ENCODE measurements at regions of chr12 and their contacts with region 1.

Region 1: DNA sequence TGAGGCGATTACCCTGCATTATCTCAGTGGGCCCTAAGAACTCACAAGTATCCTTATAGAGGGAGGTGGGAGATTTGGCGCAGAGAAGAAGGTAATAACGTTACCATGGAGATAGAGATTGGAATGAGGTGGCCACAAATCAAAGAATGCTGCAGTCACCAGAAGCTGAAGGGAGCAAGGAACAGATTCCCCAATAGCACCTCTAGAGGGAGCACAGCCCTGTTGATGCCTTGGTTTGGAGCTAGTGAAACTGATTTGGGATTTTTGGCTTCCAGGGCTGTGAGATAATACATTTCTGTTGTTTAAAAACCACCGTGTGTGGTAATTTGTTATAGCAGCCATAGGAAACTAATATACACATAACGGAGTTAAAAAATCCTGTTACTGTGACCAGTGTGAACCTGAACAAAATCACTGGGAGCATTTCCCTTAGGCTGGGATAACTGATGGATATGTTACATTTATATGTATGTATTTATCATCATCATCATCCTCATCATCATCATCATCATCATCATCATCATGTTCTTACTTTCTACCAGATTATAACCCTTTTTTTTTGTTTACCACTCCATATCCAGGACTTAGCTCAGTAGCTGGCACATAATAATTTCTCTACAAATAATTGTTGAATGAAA is 100.3 kb downstream of the LIN7A start:
- DNase-seq: peak in 3 of 10 donors; percentile 9 to 55 (median 53)
- H3K4me3 ChIP-seq: peak overlapping the region in 4 of 59 donors; percentile 4 to 15 (median 6)
- H3K27ac ChIP-seq: peak overlapping the region in 10 of 59 donors; percentile 7 to 56 (median 25)
- H3K27me3 ChIP-seq: peaks cover 0 to 5% (median 0%) of the 10 kb centered on the region in 45 donors
- CTCF ChIP-seq: peak; percentile 38 to 76 (median 66)

Region 2: DNA sequence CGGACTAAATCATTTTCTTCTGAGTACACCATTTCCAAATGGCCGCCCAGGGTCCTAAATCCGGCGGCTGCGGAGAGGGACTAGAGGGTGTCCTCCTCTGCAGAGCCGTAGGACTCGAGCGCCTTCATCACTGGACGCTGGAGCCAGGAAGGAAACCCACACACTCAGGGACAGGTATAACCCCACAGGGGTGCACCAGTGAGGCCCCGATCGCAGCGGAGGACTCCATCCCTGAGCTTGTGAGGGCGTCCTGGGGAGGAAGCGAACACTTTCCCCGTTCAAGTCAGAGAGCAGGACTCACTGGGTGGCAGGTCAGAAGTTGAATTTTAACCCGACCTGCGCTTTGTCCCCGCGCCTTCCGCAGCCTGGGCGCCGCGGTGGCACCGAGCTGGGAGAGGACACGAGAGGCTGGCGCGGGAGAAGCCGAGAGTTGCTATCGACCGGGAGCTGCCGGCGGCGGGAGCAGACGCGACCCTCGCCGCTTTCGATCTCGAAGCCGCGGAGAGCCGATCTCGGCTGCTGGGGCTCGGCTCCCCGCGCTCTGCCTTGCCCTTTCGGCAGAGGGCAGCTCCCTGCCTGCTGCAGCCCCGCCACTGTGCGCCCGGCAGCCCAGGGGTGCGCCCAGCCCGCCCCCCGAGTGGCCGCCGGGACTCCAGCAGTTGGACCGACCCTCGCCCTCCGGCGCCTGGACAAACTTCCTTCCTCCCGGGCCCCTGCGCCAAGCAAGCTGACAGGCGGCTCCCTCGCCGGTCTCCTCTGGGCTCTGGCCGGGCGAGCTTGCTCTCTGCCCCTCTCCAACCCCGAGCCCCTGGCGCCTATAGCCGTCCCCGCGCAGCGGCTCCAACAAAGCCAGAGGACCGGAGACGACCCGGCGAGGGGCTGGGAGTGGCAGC is 99.3 kb after region 1 on chr12:
- intact Hi-C with region 1: loop called in 1 of 2 experiments (anchors 10 kb)
- DNase-seq: peak in 9 of 10 donors; percentile 27 to 71 (median 56)
- H3K4me3 ChIP-seq: peak overlapping the region; percentile 59 to 93 (median 82)
- H3K27ac ChIP-seq: peak overlapping the region in 58 of 59 donors; percentile 11 to 96 (median 88)
- H3K27me3 ChIP-seq: peaks cover 0 to 3% (median 0%) of the 10 kb centered on the region in 45 donors
- CTCF ChIP-seq: peak in 3 of 56 donors; percentile 7 to 9 (median 8)

Region 3: GRCh38 chr12:81257947-81258551 is 420.6 kb after region 1 on chr12:
- intact Hi-C with region 1: loop called in 1 of 2 experiments (anchors 5 kb)
- DNase-seq: no peak
- H3K4me3 ChIP-seq: peak overlapping the region in 2 of 59 donors; percentile 5 to 16
- H3K27ac ChIP-seq: peak overlapping the region in 44 of 59 donors; percentile 1 to 72 (median 33)
- H3K27me3 ChIP-seq: no peaks in the 10 kb centered on the region
- CTCF ChIP-seq: peak; percentile 47 to 84 (median 70)

Measured in dorsolateral prefrontal cortex (tissue), 120 donors.